ENCODE measurements at regions of chr6 and their contacts with region 1.

Region 1: DNA sequence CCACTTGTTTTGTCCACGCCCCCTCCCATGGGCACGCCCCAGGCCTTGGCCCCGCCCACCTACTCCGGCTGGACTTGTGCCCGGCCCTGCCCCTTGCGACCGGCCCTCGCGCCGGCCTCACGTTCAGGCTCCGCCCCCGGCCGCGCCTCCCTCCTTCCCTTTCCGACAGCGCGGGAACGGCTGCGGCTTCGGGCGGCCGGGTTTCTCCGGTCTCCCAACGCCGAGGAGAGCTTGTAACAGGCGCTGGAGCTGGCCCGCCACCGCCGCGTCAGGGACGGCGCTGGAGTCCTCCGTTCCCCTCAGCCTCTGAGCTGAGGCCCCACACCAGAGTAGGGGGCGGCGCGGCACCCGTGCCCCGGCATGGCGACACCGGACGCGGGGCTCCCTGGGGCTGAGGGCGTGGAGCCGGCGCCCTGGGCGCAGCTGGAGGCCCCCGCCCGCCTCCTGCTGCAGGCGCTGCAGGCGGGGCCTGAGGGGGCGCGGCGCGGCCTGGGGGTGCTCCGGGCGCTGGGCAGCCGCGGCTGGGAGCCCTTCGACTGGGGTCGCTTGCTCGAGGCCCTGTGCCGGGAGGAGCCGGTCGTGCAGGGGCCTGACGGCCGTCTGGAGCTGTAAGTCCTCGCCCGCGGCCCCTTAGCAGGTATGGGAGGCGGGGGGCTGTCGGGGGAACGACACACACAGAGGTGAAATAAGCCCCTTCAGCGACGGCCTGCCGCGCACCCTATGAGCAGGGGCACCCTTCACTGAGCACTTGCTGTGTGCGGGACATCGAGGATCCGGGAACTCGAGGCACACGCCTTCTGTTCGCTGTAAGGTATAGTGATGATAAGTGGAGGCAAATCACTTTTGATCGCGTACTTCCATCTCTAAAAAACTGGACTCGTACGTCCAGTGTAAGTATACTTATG is at the start of gene FANCE:
- DNase-seq: peak; percentile 78 to 94 (median 83)
- H3K4me3 ChIP-seq: peak within 1 kb of the TSS; percentile 69
- H3K4me3 Mint-ChIP-seq: peak within 1 kb of the TSS; percentile 84 to 92 (median 88)
- H3K27ac ChIP-seq: peak within 1 kb of the TSS; percentile 22
- H3K27ac Mint-ChIP-seq: peak within 1 kb of the TSS; percentile 37 to 90 (median 85)
- H3K4me1 ChIP-seq: peaks cover 21% of the 10 kb centered on the region
- H3K4me1 Mint-ChIP-seq: peaks cover 31 to 45% (median 39%) of the 10 kb centered on the region in 3 donors
- H3K27me3 ChIP-seq: no peaks in the 10 kb centered on the region
- H3K27me3 Mint-ChIP-seq: no peaks in the 10 kb centered on the region
- total RNA-seq, gene FANCE: 23.6 to 27.5 TPM

Region 2: GRCh38 chr6:35327349-35328027 is 125.0 kb before region 1 on chr6:
- CTCF ChIA-PET with region 1: interaction called, 39 read pairs
- POLR2A ChIA-PET with region 1: no interaction called
- DNase-seq: peak; percentile 57 to 84 (median 69)
- H3K4me3 ChIP-seq: no peak overlapping the region
- H3K4me3 Mint-ChIP-seq: peak overlapping the region in 1 of 7 donors; percentile 51
- H3K27ac ChIP-seq: no peak overlapping the region
- H3K27ac Mint-ChIP-seq: peak overlapping the region; percentile 69 to 92 (median 89)
- H3K4me1 ChIP-seq: peaks cover 18% of the 10 kb centered on the region
- H3K4me1 Mint-ChIP-seq: peaks cover 19 to 21% (median 20%) of the 10 kb centered on the region in 3 donors
- H3K27me3 ChIP-seq: no peaks in the 10 kb centered on the region
- H3K27me3 Mint-ChIP-seq: no peaks in the 10 kb centered on the region

Region 3: GRCh38 chr6:35342258-35343091 is 110.0 kb before region 1 on chr6 and contains the start of gene PPARD:
- CTCF ChIA-PET with region 1: interaction called, 111 read pairs
- POLR2A ChIA-PET with region 1: interaction called, 10 read pairs
- DNase-seq: peak; percentile 96 to 98 (median 97)
- H3K4me3 ChIP-seq: peak within 1 kb of the TSS; percentile 90
- H3K4me3 Mint-ChIP-seq: peak within 1 kb of the TSS; percentile 86 to 98 (median 95)
- H3K27ac ChIP-seq: peak within 1 kb of the TSS; percentile 79
- H3K27ac Mint-ChIP-seq: peak within 1 kb of the TSS; percentile 80 to 98 (median 95)
- H3K4me1 ChIP-seq: peaks cover 51% of the 10 kb centered on the region
- H3K4me1 Mint-ChIP-seq: peaks cover 45 to 55% (median 50%) of the 10 kb centered on the region in 3 donors
- H3K27me3 ChIP-seq: no peaks in the 10 kb centered on the region
- H3K27me3 Mint-ChIP-seq: peaks cover 0 to 1% of the 10 kb centered on the region in 2 donors
- total RNA-seq, gene PPARD: 14.8 to 16.2 TPM

Region 4: GRCh38 chr6:35419417-35419816 is 33.0 kb before region 1 on chr6:
- CTCF ChIA-PET with region 1: interaction called, 10 read pairs
- POLR2A ChIA-PET with region 1: no interaction called
- DNase-seq: peak in 1 of 5 donors; percentile 33
- H3K4me3 ChIP-seq: no peak overlapping the region
- H3K4me3 Mint-ChIP-seq: no peak overlapping the region
- H3K27ac ChIP-seq: no peak overlapping the region
- H3K27ac Mint-ChIP-seq: peak overlapping the region in 5 of 8 donors; percentile 25 to 73 (median 58)
- H3K4me1 ChIP-seq: peaks cover 23% of the 10 kb centered on the region
- H3K4me1 Mint-ChIP-seq: peaks cover 21 to 36% (median 30%) of the 10 kb centered on the region in 3 donors
- H3K27me3 ChIP-seq: no peaks in the 10 kb centered on the region
- H3K27me3 Mint-ChIP-seq: no peaks in the 10 kb centered on the region

Region 5: DNA sequence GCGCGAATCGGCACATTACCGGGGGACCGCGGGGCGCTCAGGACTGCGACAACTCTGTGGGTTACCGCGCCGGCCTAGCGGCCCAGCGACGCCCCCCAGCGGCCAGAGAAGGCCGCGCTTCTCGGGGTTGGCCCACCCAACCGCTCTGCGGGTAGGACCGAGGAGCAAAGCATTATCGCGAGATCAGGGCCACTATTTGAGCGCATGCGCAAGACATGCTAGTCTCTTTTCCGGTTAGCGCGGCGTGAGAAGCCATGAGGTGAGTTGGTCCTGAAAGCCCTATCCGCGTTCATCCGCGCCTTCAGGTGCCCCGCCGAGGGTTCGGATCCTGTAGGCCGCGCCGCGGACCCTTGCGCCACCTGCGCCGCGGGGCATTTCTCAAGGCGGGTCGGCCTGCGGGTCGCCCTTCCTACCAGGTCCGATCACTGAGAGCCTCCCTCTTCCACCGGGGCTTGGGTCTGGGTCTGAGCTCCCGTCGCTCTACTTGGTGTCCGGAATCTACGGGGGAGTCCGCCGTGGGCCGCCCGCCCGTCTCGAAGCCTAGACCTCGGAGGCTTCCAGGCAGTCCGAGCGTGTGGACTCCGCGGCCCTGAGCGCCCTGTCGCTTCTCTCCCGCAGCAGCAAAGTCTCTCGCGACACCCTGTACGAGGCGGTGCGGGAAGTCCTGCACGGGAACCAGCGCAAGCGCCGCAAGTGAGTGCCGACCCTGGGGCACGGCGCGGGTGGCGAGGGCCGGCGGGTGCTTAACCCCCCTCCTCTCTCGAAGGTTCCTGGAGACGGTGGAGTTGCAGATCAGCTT is 15.9 kb after region 1 on chr6 and contains the start of gene RPL10A:
- CTCF ChIA-PET with region 1: interaction called, 35 read pairs
- POLR2A ChIA-PET with region 1: interaction called, 12 read pairs
- DNase-seq: peak; percentile 91 to 99 (median 95)
- H3K4me3 ChIP-seq: peak within 1 kb of the TSS; percentile 92
- H3K4me3 Mint-ChIP-seq: peak within 1 kb of the TSS; percentile 89 to 99 (median 97)
- H3K27ac ChIP-seq: peak within 1 kb of the TSS; percentile 87
- H3K27ac Mint-ChIP-seq: peak within 1 kb of the TSS; percentile 92 to 99 (median 98)
- H3K4me1 ChIP-seq: peaks cover 39% of the 10 kb centered on the region
- H3K4me1 Mint-ChIP-seq: peaks cover 35 to 43% (median 41%) of the 10 kb centered on the region in 3 donors
- H3K27me3 ChIP-seq: no peaks in the 10 kb centered on the region
- H3K27me3 Mint-ChIP-seq: peaks cover 0 to 5% of the 10 kb centered on the region in 2 donors
- total RNA-seq, gene RPL10A: 1,737 to 1,739 TPM

Measured in CD8-positive, alpha-beta memory T cell (primary cell).